ENCODE measurements at regions of chr14 and their contacts with region 1.

Region 1: DNA sequence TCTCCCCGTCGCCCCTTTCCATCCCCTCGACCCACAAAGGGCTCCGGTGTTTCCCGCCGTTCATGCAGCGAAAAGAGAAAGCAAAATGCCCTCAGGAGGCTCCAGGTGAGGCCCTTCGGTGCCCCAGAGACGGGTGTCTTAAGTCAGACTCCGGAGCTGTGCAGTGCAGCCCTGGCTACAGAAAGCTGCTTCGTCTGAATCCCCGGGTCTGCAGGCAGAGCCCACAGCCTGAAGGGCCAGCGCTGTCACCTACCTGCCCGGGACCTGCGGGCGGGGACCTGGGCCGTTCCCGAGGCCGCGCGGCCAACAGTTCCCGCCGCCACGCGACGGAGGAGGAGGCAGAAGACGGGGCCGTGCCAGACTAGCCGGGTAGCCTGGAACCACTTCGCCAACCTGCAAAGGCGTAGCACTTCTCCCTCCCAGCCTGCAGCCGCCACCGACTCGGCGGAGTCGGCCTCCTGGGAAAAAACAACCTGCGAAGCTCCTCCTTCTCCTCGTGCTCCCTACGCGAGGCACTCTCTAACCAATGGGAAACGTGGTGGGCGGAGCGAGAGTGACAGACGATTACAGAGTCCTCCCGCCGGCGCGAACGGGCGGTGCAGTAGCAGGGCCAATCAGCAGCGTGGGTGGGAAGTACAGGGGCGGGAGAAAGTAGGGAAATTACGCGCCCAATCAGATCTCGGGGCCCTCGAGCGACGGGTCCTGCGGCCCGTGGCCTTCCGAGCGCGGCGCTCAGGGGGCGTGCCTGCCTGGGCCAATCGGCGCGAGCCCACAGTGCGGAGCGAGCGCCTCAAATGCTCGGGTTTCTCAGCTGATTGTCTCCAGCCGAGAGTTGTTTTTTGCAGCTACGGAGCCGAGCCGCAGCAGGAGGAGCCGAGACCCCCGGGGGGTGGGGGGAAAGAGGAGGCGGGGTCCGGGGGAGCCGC is at the starts of genes GPR137C and TXNDC16:
- DNase-seq: peak; percentile 99 to 100 (median 100)
- ATAC-seq: peak; percentile 98 to 100 (median 99)
- H3K4me3 ChIP-seq: peak within 1 kb of the TSS; percentile 64 to 91 (median 78)
- H3K27ac ChIP-seq: peak within 1 kb of the TSS; percentile 53 to 96 (median 80)
- H3K4me1 ChIP-seq: peaks cover 0 to 30% (median 17%) of the 10 kb centered on the region in 12 donors
- H3K27me3 ChIP-seq: no peaks in the 10 kb centered on the region
- CTCF ChIP-seq: no peak
- POLR2A ChIP-seq: peak; percentile 97 to 98
- total RNA-seq, gene GPR137C: 0.67 to 1.9 (median 1.1) TPM
- total RNA-seq, gene TXNDC16: 3.4 to 7.1 (median 4.1) TPM

Region 2: DNA sequence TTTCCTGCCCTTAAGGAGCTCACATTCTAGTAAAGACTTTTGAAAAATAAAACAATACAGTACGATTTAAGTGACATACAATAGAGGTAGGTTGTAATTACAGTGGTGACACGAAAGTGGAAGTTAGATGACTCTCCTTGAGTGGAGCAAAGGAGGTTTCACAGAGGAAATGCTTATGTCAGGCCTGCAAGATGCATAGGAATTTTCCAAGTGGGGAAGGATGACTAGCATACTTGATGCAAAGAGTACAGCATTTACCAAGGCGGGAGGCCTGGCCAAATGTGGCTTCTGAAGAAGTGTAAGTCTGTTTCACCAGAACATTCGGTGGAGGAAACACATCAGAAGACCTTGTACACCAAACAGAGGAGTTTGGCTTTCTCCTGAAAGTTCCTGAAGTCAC is 87.8 kb after region 1 on chr14:
- intact Hi-C with region 1: no loop called
- DNase-seq: no peak
- ATAC-seq: no peak
- H3K4me3 ChIP-seq: no peak overlapping the region
- H3K27ac ChIP-seq: no peak overlapping the region
- H3K4me1 ChIP-seq: no peaks in the 10 kb centered on the region
- H3K27me3 ChIP-seq: no peaks in the 10 kb centered on the region
- CTCF ChIP-seq: no peak
- POLR2A ChIP-seq: no peak

Region 3: GRCh38 chr14:52695481-52696091 is 143.3 kb after region 1 on chr14 and contains the start of gene ERO1A:
- intact Hi-C with region 1: loop called in 5 of 10 experiments (anchors 5 to 10 kb)
- DNase-seq: peak; percentile 84 to 92 (median 87)
- ATAC-seq: peak; percentile 89 to 97 (median 93)
- H3K4me3 ChIP-seq: peak within 1 kb of the TSS; percentile 79 to 100 (median 94)
- H3K27ac ChIP-seq: peak within 1 kb of the TSS; percentile 95 to 99 (median 97)
- H3K4me1 ChIP-seq: peaks cover 0 to 56% (median 27%) of the 10 kb centered on the region in 12 donors
- H3K27me3 ChIP-seq: no peaks in the 10 kb centered on the region
- CTCF ChIP-seq: peak in 1 of 12 donors; percentile 19
- POLR2A ChIP-seq: peak in 1 of 2 donors; percentile 51
- total RNA-seq, gene ERO1A: 13.9 to 36.7 (median 16.3) TPM

Region 4: DNA sequence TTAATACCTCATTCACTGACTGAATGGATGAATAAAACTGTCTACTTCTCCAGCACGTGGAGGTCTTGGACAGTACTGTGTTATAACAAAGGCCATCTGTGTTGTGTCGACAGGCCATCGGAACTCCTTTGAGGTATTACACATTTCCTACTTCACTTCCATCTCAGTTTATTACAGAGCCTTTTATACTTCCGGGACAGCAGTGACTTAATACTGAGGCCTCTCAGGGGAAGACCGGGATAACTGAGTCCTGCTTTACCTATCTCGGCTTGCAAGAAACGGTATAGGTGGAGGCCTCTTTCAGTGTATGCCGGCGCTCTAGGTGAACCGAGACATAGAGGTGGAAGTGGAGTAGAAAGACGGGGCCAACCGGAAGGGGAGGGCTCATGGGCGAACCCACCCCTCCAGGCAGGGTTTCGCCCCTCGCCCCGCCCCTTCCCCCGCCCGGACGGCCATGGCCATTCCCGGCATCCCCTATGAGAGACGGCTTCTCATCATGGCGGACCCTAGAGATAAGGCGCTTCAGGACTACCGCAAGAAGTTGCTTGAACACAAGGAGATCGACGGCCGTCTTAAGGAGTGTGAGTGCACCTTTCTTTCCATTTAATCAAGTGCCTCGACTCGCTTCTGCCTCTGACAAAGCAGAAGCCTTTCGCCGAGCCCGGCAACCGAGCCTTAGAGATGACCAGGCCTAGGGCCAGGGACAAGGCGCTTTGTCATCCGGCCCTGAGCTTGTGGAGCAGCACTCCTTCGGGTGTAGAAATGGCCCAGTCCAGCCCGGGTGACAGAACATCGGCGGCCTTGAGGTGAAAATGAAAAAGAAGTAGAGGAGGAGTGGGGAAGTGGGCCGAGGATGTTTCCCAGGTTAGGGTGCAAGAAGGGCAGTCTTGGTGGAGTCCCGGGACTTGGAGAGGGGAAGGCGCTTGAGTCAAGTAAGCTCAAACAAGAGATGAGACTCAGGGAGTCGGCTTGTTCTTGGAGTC is 154.7 kb after region 1 on chr14 and contains the start of gene PSMC6:
- intact Hi-C with region 1: loop called in 3 of 10 experiments (anchors 2 to 10 kb)
- DNase-seq: peak; percentile 96 to 97 (median 96)
- ATAC-seq: peak; percentile 99 to 100 (median 100)
- H3K4me3 ChIP-seq: peak within 1 kb of the TSS; percentile 61 to 91 (median 80)
- H3K27ac ChIP-seq: peak within 1 kb of the TSS; percentile 68 to 93 (median 90)
- H3K4me1 ChIP-seq: peaks cover 0 to 43% (median 20%) of the 10 kb centered on the region in 12 donors
- H3K27me3 ChIP-seq: no peaks in the 10 kb centered on the region
- CTCF ChIP-seq: no peak
- POLR2A ChIP-seq: peak in 1 of 2 donors; percentile 58
- total RNA-seq, gene PSMC6: 74.3 to 90.7 (median 81.4) TPM

Region 5: GRCh38 chr14:52791203-52792096 is 239.1 kb after region 1 on chr14 and contains the start of gene GNPNAT1:
- intact Hi-C with region 1: loop called in 1 of 10 experiments (anchors 5 kb)
- DNase-seq: peak; percentile 85 to 93 (median 88)
- ATAC-seq: peak; percentile 78 to 97 (median 94)
- H3K4me3 ChIP-seq: peak within 1 kb of the TSS; percentile 52 to 82 (median 70)
- H3K27ac ChIP-seq: peak within 1 kb of the TSS; percentile 58 to 91 (median 87)
- H3K4me1 ChIP-seq: peaks cover 0 to 30% (median 12%) of the 10 kb centered on the region in 12 donors
- H3K27me3 ChIP-seq: no peaks in the 10 kb centered on the region
- CTCF ChIP-seq: no peak
- POLR2A ChIP-seq: peak in 1 of 2 donors; percentile 56
- total RNA-seq, gene GNPNAT1: 5.3 to 12.8 (median 8.0) TPM

Region 6: GRCh38 chr14:53103636-53104305 is 551.4 kb after region 1 on chr14:
- intact Hi-C with region 1: no loop called
- DNase-seq: no peak
- ATAC-seq: no peak
- H3K4me3 ChIP-seq: no peak overlapping the region
- H3K27ac ChIP-seq: peak overlapping the region in 1 of 12 donors; percentile 3
- H3K4me1 ChIP-seq: peaks cover 0 to 6% (median 0%) of the 10 kb centered on the region in 12 donors
- H3K27me3 ChIP-seq: no peaks in the 10 kb centered on the region
- CTCF ChIP-seq: no peak
- POLR2A ChIP-seq: no peak